ENCODE measurements at regions of chr2 and their contacts with region 1.

Region 1: GRCh38 chr2:96816128-96816835 is at the start of gene CNNM3:
- DNase-seq: peak; percentile 97
- ATAC-seq: peak; percentile 93
- H3K4me3 Mint-ChIP-seq: peak within 1 kb of the TSS; percentile 81
- H3K27ac Mint-ChIP-seq: peak within 1 kb of the TSS; percentile 56
- H3K4me1 Mint-ChIP-seq: peaks cover 46% of the 10 kb centered on the region
- H3K27me3 Mint-ChIP-seq: no peaks in the 10 kb centered on the region
- total RNA-seq, gene CNNM3: 19.2 to 31.2 TPM

Region 2: GRCh38 chr2:95514718-95515117 is 1301.6 kb before region 1 on chr2:
- CTCF ChIA-PET with region 1: no interaction called
- POLR2A ChIA-PET with region 1: no interaction called
- intact Hi-C with region 1: no loop called
- DNase-seq: no peak
- ATAC-seq: no peak
- H3K4me3 Mint-ChIP-seq: no peak overlapping the region
- H3K27ac Mint-ChIP-seq: no peak overlapping the region
- H3K4me1 Mint-ChIP-seq: no peaks in the 10 kb centered on the region
- H3K27me3 Mint-ChIP-seq: peaks cover 8% of the 10 kb centered on the region

Region 3: GRCh38 chr2:96404446-96405373 is 411.6 kb before region 1 on chr2:
- CTCF ChIA-PET with region 1: no interaction called
- POLR2A ChIA-PET with region 1: no interaction called
- intact Hi-C with region 1: no loop called
- DNase-seq: no peak
- ATAC-seq: no peak
- H3K4me3 Mint-ChIP-seq: no peak overlapping the region
- H3K27ac Mint-ChIP-seq: no peak overlapping the region
- H3K4me1 Mint-ChIP-seq: peaks cover 33% of the 10 kb centered on the region
- H3K27me3 Mint-ChIP-seq: no peaks in the 10 kb centered on the region

Region 4: DNA sequence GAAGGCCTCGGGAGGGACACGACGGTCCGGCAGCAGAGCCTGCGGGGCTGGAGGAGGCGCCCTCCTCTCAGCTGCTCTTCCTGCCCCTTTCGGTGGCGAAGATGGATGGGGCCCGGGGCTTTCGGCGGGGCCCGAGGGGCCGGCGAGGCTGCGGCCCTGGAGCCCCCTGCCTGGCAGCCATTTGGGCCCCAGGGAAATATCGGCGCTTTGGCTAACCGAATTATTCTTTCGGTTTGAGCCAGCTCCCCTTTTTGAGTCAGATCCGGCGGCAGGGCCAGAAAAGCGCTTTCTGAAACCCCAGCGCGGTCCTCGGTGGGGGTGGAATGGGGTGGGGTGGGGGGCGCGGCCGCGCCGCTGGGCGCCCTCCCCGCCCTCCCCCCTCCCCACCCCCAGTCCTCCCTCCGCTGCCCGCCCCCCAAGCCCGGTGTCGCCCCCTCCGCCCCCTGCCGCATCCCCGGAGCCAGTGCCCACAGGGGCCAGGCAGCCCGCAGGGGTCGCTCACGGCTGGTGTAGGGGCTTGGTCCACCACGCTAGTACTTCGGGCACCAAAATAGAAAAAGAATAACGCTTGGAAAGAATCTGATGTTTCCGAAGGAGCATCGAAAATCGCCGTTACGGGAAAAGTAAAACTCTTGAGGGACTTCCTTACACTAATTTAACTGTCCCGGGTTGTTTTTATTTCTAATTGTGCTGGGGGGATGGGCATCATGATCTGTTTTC is 288.8 kb before region 1 on chr2:
- CTCF ChIA-PET with region 1: no interaction called
- POLR2A ChIA-PET with region 1: no interaction called
- intact Hi-C with region 1: loop called in 1 of 2 experiments (anchors 2 kb)
- DNase-seq: peak; percentile 87
- ATAC-seq: no peak
- H3K4me3 Mint-ChIP-seq: peak overlapping the region; percentile 76
- H3K27ac Mint-ChIP-seq: peak overlapping the region; percentile 98
- H3K4me1 Mint-ChIP-seq: peaks cover 88% of the 10 kb centered on the region
- H3K27me3 Mint-ChIP-seq: peaks cover 2% of the 10 kb centered on the region

Region 5: DNA sequence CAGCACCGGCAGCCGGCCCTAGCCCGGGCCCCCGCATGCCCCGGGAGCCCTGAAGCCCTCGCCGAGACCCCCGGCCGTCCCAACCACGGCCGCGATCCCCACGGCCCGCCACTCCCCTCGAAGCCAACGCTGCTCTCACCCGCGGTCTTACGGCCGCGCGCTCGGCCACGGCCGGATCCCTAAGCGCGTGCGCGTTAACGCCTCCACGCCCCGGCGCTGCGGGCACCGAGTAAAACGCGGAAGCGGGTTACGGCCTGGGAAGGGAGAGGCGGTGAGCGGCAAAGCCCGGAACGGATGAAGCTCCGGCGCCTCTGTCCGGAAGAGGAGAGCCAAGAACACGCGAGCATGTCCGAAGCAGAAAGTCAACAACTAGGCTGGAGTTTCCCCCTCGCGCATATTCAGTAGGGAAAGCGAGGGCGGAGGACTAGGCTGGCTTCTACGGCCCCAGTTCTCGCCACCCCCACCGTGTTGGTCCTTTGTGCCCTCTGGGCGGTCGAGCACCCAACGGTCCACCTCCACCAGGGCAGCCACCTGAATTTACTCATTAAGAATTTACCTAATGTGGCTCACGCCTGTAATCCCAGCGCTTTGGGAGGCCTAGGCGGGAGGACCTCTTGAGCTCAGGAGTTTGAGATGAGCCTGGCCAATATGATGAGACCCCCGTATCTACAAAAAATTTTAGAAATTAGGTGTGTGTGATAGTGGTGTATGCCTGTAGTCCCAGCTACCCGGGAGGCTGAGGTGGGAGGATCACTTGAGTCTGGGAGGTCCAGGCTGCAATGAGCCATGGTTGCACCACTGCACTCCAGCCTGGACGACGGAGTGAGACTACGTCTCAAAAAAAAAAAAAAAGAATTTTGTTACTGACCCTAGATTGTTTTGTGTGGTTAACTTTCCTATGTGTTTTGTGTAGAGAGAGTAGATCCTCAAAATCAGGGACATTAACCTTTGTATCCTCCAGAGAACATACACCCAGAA is 177.8 kb before region 1 on chr2 and contains the start of gene KANSL3:
- CTCF ChIA-PET with region 1: no interaction called
- POLR2A ChIA-PET with region 1: no interaction called
- intact Hi-C with region 1: loop called (anchors 1 to 5 kb)
- DNase-seq: peak; percentile 94
- ATAC-seq: peak; percentile 86
- H3K4me3 Mint-ChIP-seq: peak within 1 kb of the TSS; percentile 91
- H3K27ac Mint-ChIP-seq: peak within 1 kb of the TSS; percentile 93
- H3K4me1 Mint-ChIP-seq: peaks cover 30% of the 10 kb centered on the region
- H3K27me3 Mint-ChIP-seq: no peaks in the 10 kb centered on the region
- total RNA-seq, gene KANSL3: 33.9 to 39.1 TPM

Region 6: DNA sequence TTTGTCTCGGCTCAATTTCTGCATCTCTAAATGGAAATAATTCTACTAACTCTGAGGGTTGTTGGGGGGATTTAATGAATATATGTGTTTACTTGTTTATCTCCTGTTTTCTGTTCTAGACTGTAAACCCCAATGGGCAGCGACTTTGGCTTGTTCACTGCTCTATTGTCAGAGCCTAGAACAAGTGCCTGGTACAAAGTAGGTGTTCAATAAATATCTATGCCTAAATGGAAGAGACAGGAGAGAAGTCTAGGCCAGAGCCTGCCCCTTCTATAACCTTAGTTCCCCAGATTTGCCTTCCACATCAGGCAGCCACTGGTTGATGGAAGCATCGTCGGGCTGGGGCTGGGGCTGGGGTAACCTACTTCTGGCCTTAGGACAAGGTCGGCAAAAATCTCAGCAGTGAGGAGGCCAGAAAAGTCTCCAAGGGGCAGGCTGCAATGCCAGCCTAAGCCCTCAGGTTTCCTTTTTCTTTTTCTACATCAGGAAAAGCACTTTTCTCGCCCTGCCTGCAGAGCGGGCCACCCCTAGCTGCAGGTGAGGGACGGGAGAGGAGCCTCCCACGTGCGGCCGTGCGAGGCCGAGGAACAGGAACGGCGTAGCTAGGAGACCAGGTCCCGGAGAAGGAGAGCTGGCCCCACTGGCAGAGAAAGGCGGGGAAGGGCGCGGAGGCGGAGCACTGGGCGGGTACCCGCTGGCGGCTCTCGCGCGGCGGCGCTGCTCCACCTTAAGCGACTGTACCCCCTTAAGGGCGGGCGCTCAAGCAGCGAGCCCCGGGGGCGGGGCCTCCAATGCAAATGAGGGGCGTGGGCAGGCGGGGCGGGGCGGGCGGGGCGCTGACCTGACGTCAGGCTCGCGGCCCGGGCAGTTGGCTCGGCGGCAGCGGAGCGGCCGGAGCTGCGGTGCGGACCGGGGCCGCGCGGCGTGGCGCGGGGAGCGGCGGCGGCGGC is 56.0 kb before region 1 on chr2 and contains the start of gene CNNM4:
- CTCF ChIA-PET with region 1: interaction called, 7 read pairs
- POLR2A ChIA-PET with region 1: interaction called, 3 read pairs
- intact Hi-C with region 1: loop called (anchors 1 to 5 kb)
- DNase-seq: peak; percentile 96
- ATAC-seq: peak; percentile 93
- H3K4me3 Mint-ChIP-seq: peak within 1 kb of the TSS; percentile 75
- H3K27ac Mint-ChIP-seq: peak within 1 kb of the TSS; percentile 82
- H3K4me1 Mint-ChIP-seq: peaks cover 43% of the 10 kb centered on the region
- H3K27me3 Mint-ChIP-seq: no peaks in the 10 kb centered on the region
- total RNA-seq, gene CNNM4: 7.1 to 11.3 TPM

Region 7: DNA sequence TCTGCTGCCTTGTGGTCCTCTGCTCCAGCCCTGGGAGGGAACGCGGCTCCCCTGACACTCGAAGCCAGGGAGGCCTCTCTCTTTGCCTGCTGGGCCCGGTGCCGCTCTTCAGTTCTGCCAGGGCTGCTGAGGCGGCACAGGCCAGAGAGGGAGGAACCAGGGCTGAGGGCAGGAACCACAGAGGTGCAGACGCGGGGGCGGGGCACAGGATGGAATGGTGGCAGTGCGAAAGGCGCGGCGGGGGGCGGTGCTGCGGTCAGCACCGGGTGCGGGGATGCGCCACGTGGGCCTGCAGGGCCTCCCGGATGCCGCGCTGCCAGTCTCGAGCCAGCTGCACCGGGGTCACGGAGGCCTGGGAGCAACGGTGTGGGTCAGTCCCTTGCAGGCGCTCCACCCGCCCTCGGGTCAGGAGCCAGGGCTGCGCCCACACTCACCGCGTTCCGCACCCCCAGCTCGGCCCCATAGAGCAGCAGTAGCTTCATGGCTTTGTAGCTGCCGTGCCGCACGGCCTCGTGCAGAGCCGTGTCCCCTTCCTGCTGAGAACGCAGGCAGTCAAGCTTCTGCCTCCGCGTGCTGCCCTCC is 23.1 kb after region 1 on chr2:
- CTCF ChIA-PET with region 1: interaction called, 4 read pairs
- POLR2A ChIA-PET with region 1: no interaction called
- intact Hi-C with region 1: loop called in 1 of 2 experiments (anchors 1 kb)
- DNase-seq: peak; percentile 89
- ATAC-seq: peak; percentile 91
- H3K4me3 Mint-ChIP-seq: no peak overlapping the region
- H3K27ac Mint-ChIP-seq: no peak overlapping the region
- H3K4me1 Mint-ChIP-seq: peaks cover 11% of the 10 kb centered on the region
- H3K27me3 Mint-ChIP-seq: no peaks in the 10 kb centered on the region

Region 8: GRCh38 chr2:96868555-96869280 is 52.4 kb after region 1 on chr2:
- CTCF ChIA-PET with region 1: no interaction called
- POLR2A ChIA-PET with region 1: no interaction called
- intact Hi-C with region 1: loop called in 1 of 2 experiments (anchors 1 kb)
- DNase-seq: peak; percentile 77
- ATAC-seq: peak; percentile 52
- H3K4me3 Mint-ChIP-seq: peak overlapping the region; percentile 78
- H3K27ac Mint-ChIP-seq: peak overlapping the region; percentile 83
- H3K4me1 Mint-ChIP-seq: peaks cover 41% of the 10 kb centered on the region
- H3K27me3 Mint-ChIP-seq: peaks cover 6% of the 10 kb centered on the region

Region 9: GRCh38 chr2:96888072-96889011 is 72.1 kb after region 1 on chr2:
- CTCF ChIA-PET with region 1: no interaction called
- POLR2A ChIA-PET with region 1: no interaction called
- intact Hi-C with region 1: no loop called
- DNase-seq: no peak
- ATAC-seq: peak; percentile 61
- H3K4me3 Mint-ChIP-seq: no peak overlapping the region
- H3K27ac Mint-ChIP-seq: no peak overlapping the region
- H3K4me1 Mint-ChIP-seq: peaks cover 41% of the 10 kb centered on the region
- H3K27me3 Mint-ChIP-seq: no peaks in the 10 kb centered on the region

Region 10: DNA sequence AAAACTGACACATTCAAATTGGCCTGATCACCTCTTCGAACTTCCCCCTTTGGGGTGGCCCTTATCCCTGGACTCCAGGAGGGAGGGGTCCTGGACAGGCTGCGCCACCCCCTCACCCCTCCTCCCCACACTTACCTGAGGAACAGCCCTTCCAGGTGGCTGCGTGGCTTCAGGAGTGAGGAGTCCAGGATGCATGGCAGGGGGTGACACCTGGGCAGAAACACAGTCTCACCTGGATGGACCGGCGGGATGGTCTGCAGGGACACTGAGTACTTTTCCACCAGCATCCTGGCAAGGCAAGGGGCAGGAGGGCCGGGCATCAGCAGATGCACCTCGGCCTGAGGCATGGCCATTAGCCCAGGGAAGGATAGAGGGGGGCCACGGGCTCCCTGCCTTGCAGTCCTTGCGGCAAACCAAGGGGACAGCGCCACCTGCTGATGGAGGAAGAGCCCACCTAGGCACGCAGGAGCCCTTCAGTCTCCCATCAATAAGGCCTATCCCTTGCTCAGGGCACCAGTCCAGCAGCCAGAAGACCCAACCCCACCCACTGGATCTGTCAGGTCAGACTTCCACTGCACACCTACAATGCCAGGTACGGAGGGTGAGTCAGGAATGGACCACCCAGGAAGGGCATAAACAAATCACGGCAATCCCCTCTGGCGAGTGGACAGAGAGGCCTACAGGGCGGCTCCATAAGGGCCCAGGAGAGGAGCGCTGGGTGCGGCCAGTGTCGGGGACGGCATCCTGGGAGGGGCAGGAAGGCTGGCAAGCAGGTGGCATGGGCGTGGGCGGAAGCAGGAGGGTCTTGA is 144.1 kb after region 1 on chr2:
- CTCF ChIA-PET with region 1: interaction called, 3 read pairs
- POLR2A ChIA-PET with region 1: no interaction called
- intact Hi-C with region 1: loop called in 1 of 2 experiments (anchors 1 kb)
- DNase-seq: peak; percentile 93
- ATAC-seq: peak; percentile 78
- H3K4me3 Mint-ChIP-seq: no peak overlapping the region
- H3K27ac Mint-ChIP-seq: no peak overlapping the region
- H3K4me1 Mint-ChIP-seq: peaks cover 50% of the 10 kb centered on the region
- H3K27me3 Mint-ChIP-seq: no peaks in the 10 kb centered on the region

Measured in activated CD4-positive, alpha-beta T cell treated with anti-CD3 and anti-CD28 coated beads for 36 hours (primary cell).